Activated CD4-positive, alpha-beta T cell treated with anti-CD3 and anti-CD28 coated beads for 36 hours (primary cell): ENCODE measurements at regions of chr7 and their contacts with region 1.

Region 1: GRCh38 chr7:99325545-99326407 is at the start of gene ARPC1A:
- DNase-seq: peak; percentile 95
- ATAC-seq: peak; percentile 86
- H3K4me3 Mint-ChIP-seq: peak within 1 kb of the TSS; percentile 85
- H3K27ac Mint-ChIP-seq: peak within 1 kb of the TSS; percentile 75
- H3K4me1 Mint-ChIP-seq: peaks cover 40% of the 10 kb centered on the region
- H3K27me3 Mint-ChIP-seq: no peaks in the 10 kb centered on the region
- total RNA-seq, gene ARPC1A: 52.3 to 65.6 TPM

Region 2: DNA sequence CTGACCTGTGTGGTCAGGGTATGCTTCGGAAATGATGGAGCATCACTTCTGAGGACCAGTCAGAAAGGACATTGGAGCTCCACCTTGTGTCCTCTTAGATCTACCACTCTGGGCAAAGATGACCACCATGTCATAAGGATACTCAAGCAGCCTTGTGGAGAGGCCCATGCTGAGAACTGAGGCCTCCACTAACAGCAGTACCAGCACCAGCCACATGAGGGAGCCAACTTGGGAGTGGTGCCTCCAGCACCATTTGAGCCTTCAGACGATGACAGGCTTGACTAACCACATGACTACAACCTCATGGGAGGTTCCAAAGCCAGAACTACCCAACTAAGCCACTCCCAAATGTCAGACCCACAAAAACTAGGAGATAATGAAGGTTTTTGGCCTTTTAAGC is 592.7 kb before region 1 on chr7:
- CTCF ChIA-PET with region 1: no interaction called
- POLR2A ChIA-PET with region 1: no interaction called
- intact Hi-C with region 1: no loop called
- DNase-seq: peak; percentile 80
- ATAC-seq: peak; percentile 64
- H3K4me3 Mint-ChIP-seq: no peak overlapping the region
- H3K27ac Mint-ChIP-seq: no peak overlapping the region
- H3K4me1 Mint-ChIP-seq: no peaks in the 10 kb centered on the region
- H3K27me3 Mint-ChIP-seq: peaks cover 12% of the 10 kb centered on the region

Region 3: GRCh38 chr7:98878365-98879165 is 447.2 kb before region 1 on chr7 and contains the start of gene TRRAP:
- CTCF ChIA-PET with region 1: interaction called, 3 read pairs
- POLR2A ChIA-PET with region 1: no interaction called
- intact Hi-C with region 1: loop called in 1 of 2 experiments (anchors 5 kb)
- DNase-seq: peak; percentile 88
- ATAC-seq: peak; percentile 67
- H3K4me3 Mint-ChIP-seq: peak within 1 kb of the TSS; percentile 91
- H3K27ac Mint-ChIP-seq: peak within 1 kb of the TSS; percentile 96
- H3K4me1 Mint-ChIP-seq: peaks cover 30% of the 10 kb centered on the region
- H3K27me3 Mint-ChIP-seq: no peaks in the 10 kb centered on the region
- total RNA-seq, gene TRRAP: 51.7 to 54.0 TPM

Region 4: GRCh38 chr7:99380032-99380822 is 54.5 kb after region 1 on chr7:
- CTCF ChIA-PET with region 1: interaction called, 3 read pairs
- POLR2A ChIA-PET with region 1: no interaction called
- intact Hi-C with region 1: loop called in 1 of 2 experiments (anchors 2 kb)
- DNase-seq: peak; percentile 69
- ATAC-seq: peak; percentile 22
- H3K4me3 Mint-ChIP-seq: peak overlapping the region; percentile 78
- H3K27ac Mint-ChIP-seq: peak overlapping the region; percentile 96
- H3K4me1 Mint-ChIP-seq: peaks cover 62% of the 10 kb centered on the region
- H3K27me3 Mint-ChIP-seq: no peaks in the 10 kb centered on the region

Region 5: DNA sequence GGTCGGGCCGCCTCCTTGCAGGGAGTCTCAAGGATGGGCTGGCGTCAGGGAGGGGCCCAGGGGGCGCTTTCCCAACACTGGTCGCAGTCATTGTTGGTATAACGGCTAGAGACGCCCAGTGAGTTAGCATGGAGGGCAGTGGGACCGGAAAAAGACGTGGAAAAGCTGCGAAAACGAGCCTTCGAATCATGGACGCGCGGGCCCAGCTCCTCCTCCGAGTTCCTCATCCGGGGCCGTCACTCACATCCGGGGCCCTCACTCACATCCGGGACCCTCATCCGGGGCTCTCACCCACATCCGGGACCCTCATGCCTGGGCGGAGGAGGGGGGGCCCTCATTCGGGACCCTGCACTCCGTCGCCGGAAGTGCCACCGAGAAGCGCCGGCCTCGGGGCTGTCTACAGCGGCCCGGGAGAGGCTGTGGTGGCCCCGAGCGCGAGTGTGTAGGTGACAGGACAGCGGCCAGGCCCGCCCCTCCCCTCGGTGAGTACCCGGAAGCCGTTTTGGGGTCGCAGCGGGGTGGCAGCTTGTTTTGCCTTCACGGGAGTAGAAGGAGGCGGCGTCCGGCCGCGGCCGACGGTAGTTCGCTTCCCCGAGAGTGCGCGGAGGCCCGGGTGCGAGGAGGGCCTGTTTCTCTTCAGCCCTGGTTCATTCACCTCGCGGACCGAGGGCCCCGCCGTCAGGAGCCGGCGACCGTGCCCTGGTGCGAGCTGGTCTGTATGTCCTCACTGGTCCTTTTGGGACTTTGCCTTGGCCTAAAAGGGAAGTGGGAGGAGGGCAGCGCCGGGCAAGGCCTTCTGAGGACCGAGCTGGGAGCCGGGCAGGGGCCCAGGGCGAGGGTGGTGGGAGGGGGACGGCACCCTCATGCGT is 232.8 kb after region 1 on chr7 and contains the start of gene ZNF655:
- CTCF ChIA-PET with region 1: no interaction called
- POLR2A ChIA-PET with region 1: no interaction called
- intact Hi-C with region 1: loop called in 1 of 2 experiments (anchors 5 kb)
- DNase-seq: peak; percentile 90
- ATAC-seq: peak; percentile 75
- H3K4me3 Mint-ChIP-seq: peak within 1 kb of the TSS; percentile 94
- H3K27ac Mint-ChIP-seq: peak within 1 kb of the TSS; percentile 96
- H3K4me1 Mint-ChIP-seq: peaks cover 49% of the 10 kb centered on the region
- H3K27me3 Mint-ChIP-seq: no peaks in the 10 kb centered on the region
- total RNA-seq, gene ZNF655: 51.1 to 52.0 TPM